BJ (cell line): ENCODE measurements at regions of chr14 and their contacts with region 1.

Region 1: DNA sequence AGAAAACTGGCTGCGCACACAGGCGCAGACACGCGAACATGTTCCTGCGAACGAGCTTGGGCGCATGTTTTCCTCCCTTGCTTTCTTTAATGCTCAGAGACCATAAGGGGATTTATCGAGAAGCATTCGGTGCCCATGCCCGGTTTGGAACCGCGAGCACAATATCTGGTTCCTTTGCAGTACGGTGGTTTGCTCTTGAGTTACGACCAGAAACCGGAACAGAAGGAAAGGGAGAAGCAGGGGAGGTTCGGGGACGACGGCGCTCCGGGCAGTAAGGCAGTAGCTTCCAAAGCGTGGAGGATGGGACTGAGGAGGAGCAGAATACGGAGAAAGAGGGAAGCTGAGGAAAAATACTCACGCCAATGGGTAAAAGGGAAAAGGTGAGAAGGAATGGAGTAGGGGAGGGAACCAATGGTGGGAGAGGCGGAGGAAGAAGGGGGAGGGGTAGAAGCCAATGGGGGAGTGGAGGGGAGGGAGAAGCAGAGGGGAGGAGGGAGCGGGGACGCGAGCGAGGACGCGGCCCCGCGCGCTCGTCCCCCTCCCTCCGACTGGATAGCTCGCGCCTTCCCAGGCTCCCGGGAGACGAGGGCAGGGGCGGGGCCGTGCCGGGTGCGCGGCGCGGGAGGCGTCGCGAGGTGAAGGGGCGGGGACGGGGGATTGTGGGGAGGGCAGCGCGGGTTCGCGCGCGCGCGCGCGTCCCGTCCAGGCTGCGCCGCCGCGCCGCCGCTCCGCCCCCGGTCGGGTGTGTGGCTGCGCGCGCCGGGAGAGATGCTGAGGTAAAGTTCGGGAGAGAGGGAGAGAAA is 625 bp upstream of the ARHGAP5 start:
- DNase-seq: peak; percentile 74
- H3K4me3 ChIP-seq: peak overlapping the region; percentile 99
- H3K27me3 ChIP-seq: no peaks in the 10 kb centered on the region
- CTCF ChIP-seq: no peak

Region 2: DNA sequence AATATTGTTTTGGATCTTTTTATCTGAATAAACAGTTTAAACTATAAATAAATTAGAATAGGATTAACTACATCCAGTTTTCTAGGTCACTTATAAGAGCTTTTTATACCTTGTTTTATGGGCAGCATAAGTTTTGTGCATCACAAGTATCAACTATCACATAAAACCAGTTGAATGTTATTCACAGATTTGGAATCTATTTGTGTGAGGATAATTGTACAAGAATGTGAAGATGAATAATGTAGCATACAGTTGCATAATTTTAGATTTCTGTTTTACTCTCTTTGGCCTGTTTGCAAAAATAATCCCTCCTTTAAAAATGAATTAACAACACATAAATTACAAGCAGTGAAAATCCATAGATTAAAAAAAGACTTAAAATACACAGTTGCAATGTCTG is 1365.6 kb before region 1 on chr14:
- CTCF ChIA-PET with region 1: no interaction called
- POLR2A ChIA-PET with region 1: interaction called, 22 read pairs
- DNase-seq: peak; percentile 20
- H3K4me3 ChIP-seq: no peak overlapping the region
- H3K27me3 ChIP-seq: no peaks in the 10 kb centered on the region
- CTCF ChIP-seq: no peak

Region 3: GRCh38 chr14:31934767-31935266 is 141.7 kb before region 1 on chr14:
- CTCF ChIA-PET with region 1: interaction called, 4 read pairs
- POLR2A ChIA-PET with region 1: interaction called, 10 read pairs
- DNase-seq: no peak
- H3K4me3 ChIP-seq: no peak overlapping the region
- H3K27me3 ChIP-seq: no peaks in the 10 kb centered on the region
- CTCF ChIP-seq: peak; percentile 45

Region 4: DNA sequence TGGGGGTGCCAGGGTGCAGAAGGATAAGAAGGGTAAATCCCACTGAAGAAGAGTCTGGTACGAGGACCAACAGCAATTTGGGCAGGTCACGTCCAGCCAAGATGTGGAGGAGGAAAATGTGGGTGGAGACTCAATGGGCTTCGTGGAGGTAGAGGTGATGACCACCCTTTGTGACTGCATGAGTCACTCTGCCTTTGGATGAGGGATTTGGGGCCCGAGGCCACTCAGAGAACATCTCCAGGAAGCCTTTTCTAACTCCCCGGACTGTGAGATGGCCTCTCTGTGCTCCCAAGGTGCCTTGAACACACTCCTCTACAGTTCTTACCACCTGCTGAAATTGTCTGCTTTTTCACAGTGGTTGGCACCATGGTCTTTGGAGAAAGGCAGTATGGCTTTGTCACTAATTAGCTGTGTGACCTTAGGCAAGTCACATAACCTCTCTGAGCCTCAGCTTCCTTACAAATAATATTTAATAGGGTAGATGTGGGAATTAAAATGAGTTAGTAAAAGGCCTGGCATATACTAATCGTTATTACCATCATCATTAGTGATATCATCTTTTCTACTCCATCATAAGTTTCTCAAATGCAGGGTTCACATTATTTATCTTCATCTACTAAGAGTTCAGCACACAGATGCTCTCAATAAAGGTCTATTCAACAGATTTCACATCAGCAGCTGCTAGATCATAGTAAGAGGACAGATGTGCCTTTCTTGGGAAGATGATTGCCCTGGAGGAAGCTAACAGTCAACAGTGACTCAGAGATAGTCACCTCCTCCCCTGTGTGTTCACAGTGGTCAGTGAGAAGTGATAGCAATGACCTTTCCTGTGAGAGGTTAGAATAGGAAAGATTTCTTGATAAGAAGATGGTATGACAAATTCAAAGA is 66.3 kb before region 1 on chr14:
- CTCF ChIA-PET with region 1: no interaction called
- POLR2A ChIA-PET with region 1: no interaction called
- DNase-seq: peak; percentile 50
- H3K4me3 ChIP-seq: no peak overlapping the region
- H3K27me3 ChIP-seq: peaks cover 14% of the 10 kb centered on the region
- CTCF ChIP-seq: no peak

Region 5: GRCh38 chr14:32202998-32203882 is 126.8 kb after region 1 on chr14 and contains the start of gene RNU6-8:
- CTCF ChIA-PET with region 1: no interaction called
- POLR2A ChIA-PET with region 1: no interaction called
- DNase-seq: no peak
- H3K4me3 ChIP-seq: peak within 1 kb of the TSS; percentile 53
- H3K27me3 ChIP-seq: peaks cover 2% of the 10 kb centered on the region; the same call in 1 of the 2 replicates
- CTCF ChIP-seq: no peak
- polyA plus RNA-seq, gene RNU6-8: not detected in 2 replicates

Region 6: DNA sequence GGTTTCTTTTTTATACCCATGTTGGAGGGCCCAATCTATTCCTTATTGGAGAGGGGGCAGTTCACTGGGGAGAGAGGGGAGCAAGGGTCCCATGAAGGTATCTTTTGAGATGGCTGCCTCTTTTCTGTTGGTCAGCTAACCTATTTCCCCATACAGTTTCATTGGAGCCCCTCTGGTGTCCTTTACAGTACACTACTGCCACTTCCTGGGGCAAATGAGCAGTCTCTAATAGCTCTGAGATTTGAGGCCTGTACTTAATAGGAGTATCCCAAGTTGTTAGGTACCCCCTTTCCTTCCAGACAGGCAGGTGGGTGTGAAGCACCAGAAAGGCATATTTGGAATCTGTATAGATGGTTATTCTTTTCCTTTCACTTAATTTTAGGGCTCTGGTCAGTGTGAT is 167.9 kb after region 1 on chr14:
- CTCF ChIA-PET with region 1: interaction called, 83 read pairs
- POLR2A ChIA-PET with region 1: no interaction called
- DNase-seq: no peak
- H3K4me3 ChIP-seq: no peak overlapping the region
- H3K27me3 ChIP-seq: no peaks in the 10 kb centered on the region
- CTCF ChIP-seq: peak; percentile 34

Region 7: DNA sequence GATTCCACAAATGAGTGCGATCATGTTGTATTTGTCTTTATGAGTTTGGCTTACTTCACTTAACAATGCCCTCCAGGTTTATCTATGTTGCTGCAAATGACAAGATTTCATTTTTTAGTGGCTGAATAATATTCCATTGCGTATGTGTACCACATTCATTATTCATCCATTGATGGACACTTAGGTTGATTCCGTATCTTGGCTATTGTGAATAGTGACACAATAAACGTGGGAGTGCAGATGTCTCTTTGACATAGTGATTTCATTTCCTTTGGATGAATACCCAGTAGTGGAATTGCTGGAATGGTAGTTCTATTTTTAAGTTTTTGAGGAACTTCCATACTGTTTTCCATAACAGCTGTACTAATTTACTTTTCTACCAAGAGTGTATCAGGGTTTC is 276.2 kb after region 1 on chr14:
- CTCF ChIA-PET with region 1: interaction called, 3 read pairs
- POLR2A ChIA-PET with region 1: interaction called, 20 read pairs
- DNase-seq: no peak
- H3K4me3 ChIP-seq: no peak overlapping the region
- H3K27me3 ChIP-seq: no peaks in the 10 kb centered on the region
- CTCF ChIP-seq: no peak